ENCODE measurements at regions of chr16 and their contacts with region 1.

Region 1: DNA sequence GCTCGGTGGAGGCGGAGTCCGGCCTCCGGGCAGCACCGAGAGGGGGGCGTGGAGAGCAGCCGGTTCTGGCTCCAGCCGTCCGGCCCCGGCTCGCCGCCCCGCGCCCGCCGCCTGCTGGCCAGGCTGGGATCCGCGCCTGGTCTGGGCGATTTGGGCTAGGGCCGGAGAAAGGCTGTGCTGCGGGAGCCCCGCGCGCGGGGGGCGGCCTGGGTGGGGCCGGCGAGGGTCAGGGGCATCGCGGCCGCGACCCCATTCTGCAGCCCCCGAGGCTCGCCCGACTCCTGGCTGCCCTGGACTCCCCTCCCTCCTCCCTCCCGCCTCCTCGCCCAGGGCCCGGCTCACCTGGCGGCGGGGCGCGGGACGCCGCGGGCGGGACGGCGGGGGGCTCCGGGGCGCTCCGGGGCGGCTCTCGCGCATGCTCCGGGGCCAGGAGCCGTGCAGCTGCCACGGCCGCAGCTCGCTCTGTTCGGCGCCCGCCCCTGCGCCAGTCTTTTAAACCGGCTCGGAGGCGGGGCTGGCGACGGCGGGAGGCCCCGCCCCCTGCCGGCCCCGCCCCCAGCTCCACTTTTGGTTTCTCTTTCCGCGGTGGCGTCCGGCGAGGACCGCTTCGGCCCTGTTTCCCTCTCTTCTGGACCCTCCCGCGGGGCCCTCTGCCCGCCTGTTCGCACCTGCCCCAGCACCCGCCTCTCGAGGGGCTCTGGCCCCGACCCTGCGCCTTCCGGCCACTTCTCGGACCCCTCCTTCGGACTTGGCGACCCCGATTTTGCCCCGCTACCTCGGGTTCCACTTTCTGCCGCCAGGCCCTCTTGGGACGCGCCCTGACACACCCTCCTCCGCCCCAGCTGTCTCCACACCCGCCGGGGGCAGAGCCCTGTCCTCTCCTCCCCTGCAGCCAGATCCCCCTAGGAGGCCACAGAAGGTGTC is at the start of gene SOCS1:
- DNase-seq: peak; percentile 81 to 83
- ATAC-seq: peak; percentile 67 to 75
- H3K4me3 ChIP-seq: peak within 1 kb of the TSS; percentile 81
- H3K27ac ChIP-seq: peak within 1 kb of the TSS; percentile 94 to 95
- H3K4me1 ChIP-seq: 0 out of 3 replicates have a peak, but pooled peaks cover 5% of the 10 kb centered on the region
- CTCF ChIP-seq: peak; percentile 94
- EP300 ChIP-seq: no peak
- POLR2A ChIP-seq: peak; percentile 99
- RAD21 ChIP-seq: peak; percentile 55 to 79
- polyA plus RNA-seq, gene SOCS1: 0.15 and 0.16 TPM in 2 replicates

Region 2: DNA sequence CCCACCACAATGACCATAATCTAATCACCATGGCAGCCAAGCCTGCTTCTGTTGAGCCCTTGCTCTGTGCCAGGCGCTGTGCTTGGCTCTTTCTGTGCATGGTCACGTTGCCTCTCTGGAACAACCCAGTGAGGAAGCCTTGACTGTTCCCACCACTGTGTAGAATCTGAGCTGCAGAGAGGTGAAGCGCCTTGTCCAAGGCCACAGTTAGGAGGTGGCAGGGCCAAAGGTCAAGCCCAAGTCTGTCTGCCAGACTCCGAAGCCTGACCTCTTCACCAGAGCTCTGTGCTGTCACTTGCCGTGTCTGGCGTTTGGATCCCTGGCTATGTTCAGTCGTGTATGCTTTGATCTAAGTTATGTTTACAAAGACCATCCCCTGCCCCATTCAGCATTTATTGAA is 301.1 kb before region 1 on chr16:
- CTCF ChIA-PET with region 1: interaction called, 364 read pairs
- POLR2A ChIA-PET with region 1: interaction called, 7 read pairs
- DNase-seq: no peak
- ATAC-seq: no peak
- H3K4me3 ChIP-seq: no peak overlapping the region
- H3K27ac ChIP-seq: no peak overlapping the region
- H3K4me1 ChIP-seq: 0 out of 3 replicates have a peak, but pooled peaks cover 3% of the 10 kb centered on the region
- CTCF ChIP-seq: no peak
- EP300 ChIP-seq: no peak
- POLR2A ChIP-seq: no peak
- RAD21 ChIP-seq: no peak

Region 3: GRCh38 chr16:10981697-10982216 is 274.2 kb before region 1 on chr16:
- CTCF ChIA-PET with region 1: interaction called, 364 read pairs
- POLR2A ChIA-PET with region 1: interaction called, 8 read pairs
- DNase-seq: peak; percentile 21 to 53
- ATAC-seq: peak; percentile 85 to 93; a peak in 5 of 6 replicates
- H3K4me3 ChIP-seq: no peak overlapping the region
- H3K27ac ChIP-seq: no peak overlapping the region
- H3K4me1 ChIP-seq: no peaks in the 10 kb centered on the region
- CTCF ChIP-seq: peak; percentile 31; the same call in 2 of the 3 replicates
- EP300 ChIP-seq: no peak
- POLR2A ChIP-seq: no peak
- RAD21 ChIP-seq: 0 out of 5 replicates have a peak, but pooled peaks of 1 of the 2 experiments have one; percentile 6

Region 4: GRCh38 chr16:11240636-11241473 is 15.1 kb before region 1 on chr16:
- CTCF ChIA-PET with region 1: interaction called, 14 read pairs
- POLR2A ChIA-PET with region 1: interaction called, 11 read pairs
- DNase-seq: no peak
- ATAC-seq: no peak
- H3K4me3 ChIP-seq: no peak overlapping the region
- H3K27ac ChIP-seq: no peak overlapping the region
- H3K4me1 ChIP-seq: no peaks in the 10 kb centered on the region
- CTCF ChIP-seq: no peak
- EP300 ChIP-seq: no peak
- POLR2A ChIP-seq: no peak
- RAD21 ChIP-seq: no peak

Region 5: DNA sequence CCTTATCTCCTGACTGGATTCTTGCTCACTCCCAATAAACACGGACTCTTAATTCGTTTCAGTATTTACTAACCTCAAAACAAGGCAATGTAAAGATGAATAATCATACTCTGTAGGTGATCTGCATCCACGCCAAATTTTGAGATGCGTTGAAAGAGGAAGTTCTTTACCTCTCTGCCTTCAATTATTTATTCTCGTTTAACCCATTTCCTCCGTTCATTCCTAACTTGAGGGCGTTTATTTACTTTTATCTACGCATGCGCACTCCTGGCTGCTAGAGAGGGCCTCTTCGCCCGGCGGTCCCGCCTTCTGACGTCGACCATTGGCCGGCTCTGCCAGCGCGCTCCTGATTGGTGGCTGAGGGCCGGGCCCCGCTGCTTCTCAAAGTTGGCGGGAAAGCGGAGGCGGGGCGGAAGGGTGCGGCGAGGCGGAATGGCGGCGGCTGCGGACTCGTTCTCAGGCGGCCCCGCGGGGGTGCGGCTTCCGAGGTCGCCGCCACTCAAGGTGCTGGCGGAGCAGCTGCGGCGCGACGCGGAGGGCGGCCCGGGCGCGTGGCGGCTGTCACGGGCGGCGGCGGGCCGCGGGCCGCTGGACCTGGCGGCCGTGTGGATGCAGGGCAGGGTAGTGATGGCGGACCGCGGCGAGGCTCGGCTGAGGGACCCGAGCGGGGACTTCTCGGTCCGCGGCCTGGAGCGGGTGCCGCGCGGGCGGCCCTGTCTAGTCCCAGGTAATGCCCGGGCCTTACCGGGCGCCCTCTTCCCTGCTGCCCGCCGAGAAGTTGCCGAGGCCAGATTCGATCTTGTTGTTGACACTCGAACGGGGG is 89.3 kb after region 1 on chr16 and contains the start of gene RMI2:
- CTCF ChIA-PET with region 1: interaction called, 11 read pairs
- POLR2A ChIA-PET with region 1: interaction called, 5 read pairs
- DNase-seq: peak; percentile 96 to 99
- ATAC-seq: peak; percentile 99
- H3K4me3 ChIP-seq: peak within 1 kb of the TSS; percentile 86
- H3K27ac ChIP-seq: peak within 1 kb of the TSS; percentile 80 to 93
- H3K4me1 ChIP-seq: peaks cover 10% of the 10 kb centered on the region
- CTCF ChIP-seq: no peak
- EP300 ChIP-seq: no peak
- POLR2A ChIP-seq: peak; percentile 35; the same call in 1 of the 2 replicates
- RAD21 ChIP-seq: no peak
- polyA plus RNA-seq, gene RMI2: 20.3 and 24.2 TPM in 2 replicates

Region 6: DNA sequence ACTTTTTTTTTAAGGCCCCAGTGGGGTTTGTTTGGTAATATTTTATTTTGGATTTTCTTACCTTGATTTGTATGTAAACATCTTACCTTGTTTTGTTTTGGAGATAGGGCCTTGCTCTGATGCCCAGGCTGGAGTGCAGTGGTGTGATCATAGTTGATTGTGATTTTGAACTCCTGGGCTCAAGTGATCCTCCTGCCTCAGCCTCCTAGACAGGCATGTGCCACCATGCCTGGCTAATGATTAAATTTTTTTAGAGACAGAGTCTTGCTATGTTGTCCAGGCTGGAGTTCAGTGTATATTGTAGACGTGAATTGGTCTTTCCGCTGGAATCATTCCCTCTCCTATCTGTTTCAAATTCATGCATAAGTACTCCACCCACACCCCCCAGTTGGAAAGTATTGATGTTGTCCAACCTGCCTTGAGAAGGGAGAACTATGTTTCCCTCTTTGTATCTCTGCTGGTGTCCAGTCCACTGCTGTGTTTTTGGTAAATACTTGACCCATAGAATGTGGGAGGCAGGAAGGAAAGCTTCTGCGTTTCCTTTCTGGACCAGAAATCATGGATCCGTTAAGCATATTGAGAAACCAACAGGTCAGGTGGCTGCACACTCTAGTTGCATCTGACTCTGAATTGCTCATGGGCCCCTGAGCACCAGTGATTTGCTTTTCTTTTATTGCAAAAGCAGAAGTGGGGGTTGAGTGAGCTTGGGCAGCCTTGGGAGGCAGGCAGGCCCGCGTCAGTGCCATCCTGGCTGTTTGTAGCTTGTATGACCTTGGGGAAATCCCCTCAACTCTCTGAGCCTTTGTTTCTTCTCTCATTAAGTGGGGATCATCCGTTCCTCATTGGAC is 114.3 kb after region 1 on chr16:
- CTCF ChIA-PET with region 1: interaction called, 5 read pairs
- POLR2A ChIA-PET with region 1: interaction called, 18 read pairs
- DNase-seq: no peak
- ATAC-seq: no peak; a peak in 1 of 6 replicates
- H3K4me3 ChIP-seq: no peak overlapping the region
- H3K27ac ChIP-seq: no peak overlapping the region
- H3K4me1 ChIP-seq: no peaks in the 10 kb centered on the region
- CTCF ChIP-seq: no peak
- EP300 ChIP-seq: no peak
- POLR2A ChIP-seq: no peak
- RAD21 ChIP-seq: no peak

Measured in A549 (cell line).